ENCODE measurements at regions of chr3 and their contacts with region 1.

Region 1: GRCh38 chr3:34248352-34248751 is 449.9 kb downstream of the PDCD6IP start:
- H3K4me3 ChIP-seq: no peak overlapping the region
- H3K27ac ChIP-seq: no peak overlapping the region
- H3K4me1 ChIP-seq: no peaks in the 10 kb centered on the region
- CTCF ChIP-seq: no peak

Region 2: GRCh38 chr3:34260271-34261006 is 12.1 kb after region 1 on chr3:
- CTCF ChIA-PET with region 1: interaction called, 16 read pairs
- POLR2A ChIA-PET with region 1: no interaction called
- H3K4me3 ChIP-seq: no peak overlapping the region
- H3K27ac ChIP-seq: no peak overlapping the region
- H3K4me1 ChIP-seq: no peaks in the 10 kb centered on the region
- CTCF ChIP-seq: no peak

Region 3: GRCh38 chr3:34292605-34293300 is 44.4 kb after region 1 on chr3:
- CTCF ChIA-PET with region 1: no interaction called
- POLR2A ChIA-PET with region 1: no interaction called
- H3K4me3 ChIP-seq: no peak overlapping the region
- H3K27ac ChIP-seq: no peak overlapping the region
- H3K4me1 ChIP-seq: no peaks in the 10 kb centered on the region
- CTCF ChIP-seq: no peak

Measured in HEK293 (cell line).